ENCODE measurements at regions of chr9 and their contacts with region 1.

Region 1: GRCh38 chr9:96418074-96418809 is at the start of gene ZNF367:
- DNase-seq: peak; percentile 75 to 94 (median 82)
- ATAC-seq: peak; percentile 85
- H3K4me3 ChIP-seq: peak within 1 kb of the TSS; percentile 94
- H3K4me3 Mint-ChIP-seq: peak within 1 kb of the TSS; percentile 88 to 98 (median 92)
- H3K27ac ChIP-seq: peak within 1 kb of the TSS; percentile 98
- H3K27ac Mint-ChIP-seq: peak within 1 kb of the TSS; percentile 92 to 98 (median 96)
- H3K4me1 ChIP-seq: peaks cover 19 to 31% of the 10 kb centered on the region in 2 donors
- H3K4me1 Mint-ChIP-seq: peaks cover 21 to 39% (median 31%) of the 10 kb centered on the region in 7 donors
- H3K27me3 ChIP-seq: no peaks in the 10 kb centered on the region
- H3K27me3 Mint-ChIP-seq: no peaks in the 10 kb centered on the region
- total RNA-seq, gene ZNF367: 3.8 to 22.9 (median 5.5) TPM

Region 2: GRCh38 chr9:96327694-96328352 is 90.4 kb before region 1 on chr9:
- CTCF ChIA-PET with region 1: interaction called, 4 read pairs
- POLR2A ChIA-PET with region 1: interaction called, 3 read pairs
- intact Hi-C with region 1: loop called (anchors 1 kb)
- DNase-seq: peak in 8 of 9 donors; percentile 18 to 70 (median 54)
- ATAC-seq: peak; percentile 87
- H3K4me3 ChIP-seq: no peak overlapping the region
- H3K4me3 Mint-ChIP-seq: no peak overlapping the region
- H3K27ac ChIP-seq: no peak overlapping the region
- H3K27ac Mint-ChIP-seq: no peak overlapping the region
- H3K4me1 ChIP-seq: no peaks in the 10 kb centered on the region
- H3K4me1 Mint-ChIP-seq: no peaks in the 10 kb centered on the region
- H3K27me3 ChIP-seq: no peaks in the 10 kb centered on the region
- H3K27me3 Mint-ChIP-seq: no peaks in the 10 kb centered on the region

Region 3: GRCh38 chr9:96350866-96351265 is 67.4 kb before region 1 on chr9:
- CTCF ChIA-PET with region 1: no interaction called
- POLR2A ChIA-PET with region 1: no interaction called
- intact Hi-C with region 1: no loop called
- DNase-seq: no peak
- ATAC-seq: no peak
- H3K4me3 ChIP-seq: no peak overlapping the region
- H3K4me3 Mint-ChIP-seq: no peak overlapping the region
- H3K27ac ChIP-seq: no peak overlapping the region
- H3K27ac Mint-ChIP-seq: no peak overlapping the region
- H3K4me1 ChIP-seq: no peaks in the 10 kb centered on the region
- H3K4me1 Mint-ChIP-seq: no peaks in the 10 kb centered on the region
- H3K27me3 ChIP-seq: no peaks in the 10 kb centered on the region
- H3K27me3 Mint-ChIP-seq: no peaks in the 10 kb centered on the region

Region 4: DNA sequence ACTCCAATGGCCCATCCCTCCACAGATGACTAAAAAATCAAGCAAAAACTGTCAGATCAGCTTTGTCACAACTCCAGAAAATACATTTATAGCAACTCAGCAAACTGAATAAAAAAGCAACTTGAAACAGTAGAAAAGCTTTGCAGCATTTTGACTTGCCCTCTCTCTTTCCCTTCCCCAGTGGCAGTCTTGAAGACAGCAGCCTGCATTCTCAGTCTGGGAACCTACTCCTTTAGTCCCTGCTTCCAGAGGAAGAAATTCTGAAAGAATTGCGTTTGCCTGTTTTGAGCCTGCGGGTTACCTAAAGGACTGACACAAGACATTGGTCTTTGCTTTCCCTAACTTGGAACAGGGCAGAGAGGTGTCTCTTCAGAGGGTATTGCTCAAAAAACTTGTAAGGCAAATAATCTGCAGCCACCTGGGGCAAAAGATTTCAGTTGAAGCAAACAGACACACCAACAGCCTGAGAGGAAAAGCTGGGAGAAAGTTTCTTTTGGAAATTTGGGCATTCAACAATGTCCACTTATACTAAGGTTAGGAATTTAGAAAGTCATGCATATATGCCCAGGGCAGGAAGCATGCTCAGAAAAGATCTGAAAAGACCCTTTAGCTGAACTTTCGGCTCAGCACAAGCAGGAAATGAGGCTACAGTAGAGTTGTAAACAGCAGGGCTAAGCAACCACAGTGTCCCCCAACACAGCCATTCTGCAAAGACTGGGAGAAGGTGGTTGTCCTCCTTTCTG is 19.5 kb before region 1 on chr9:
- CTCF ChIA-PET with region 1: interaction called, 7 read pairs
- POLR2A ChIA-PET with region 1: interaction called, 38 read pairs
- intact Hi-C with region 1: loop called (anchors 1 to 2 kb)
- DNase-seq: peak in 6 of 9 donors; percentile 18 to 47 (median 28)
- ATAC-seq: peak; percentile 75
- H3K4me3 ChIP-seq: peak overlapping the region; percentile 28
- H3K4me3 Mint-ChIP-seq: peak overlapping the region; percentile 58 to 73 (median 68)
- H3K27ac ChIP-seq: peak overlapping the region; percentile 59
- H3K27ac Mint-ChIP-seq: peak overlapping the region; percentile 49 to 96 (median 91)
- H3K4me1 ChIP-seq: peaks cover 16 to 18% of the 10 kb centered on the region in 2 donors
- H3K4me1 Mint-ChIP-seq: peaks cover 15 to 32% (median 26%) of the 10 kb centered on the region in 7 donors
- H3K27me3 ChIP-seq: no peaks in the 10 kb centered on the region
- H3K27me3 Mint-ChIP-seq: no peaks in the 10 kb centered on the region

Region 5: DNA sequence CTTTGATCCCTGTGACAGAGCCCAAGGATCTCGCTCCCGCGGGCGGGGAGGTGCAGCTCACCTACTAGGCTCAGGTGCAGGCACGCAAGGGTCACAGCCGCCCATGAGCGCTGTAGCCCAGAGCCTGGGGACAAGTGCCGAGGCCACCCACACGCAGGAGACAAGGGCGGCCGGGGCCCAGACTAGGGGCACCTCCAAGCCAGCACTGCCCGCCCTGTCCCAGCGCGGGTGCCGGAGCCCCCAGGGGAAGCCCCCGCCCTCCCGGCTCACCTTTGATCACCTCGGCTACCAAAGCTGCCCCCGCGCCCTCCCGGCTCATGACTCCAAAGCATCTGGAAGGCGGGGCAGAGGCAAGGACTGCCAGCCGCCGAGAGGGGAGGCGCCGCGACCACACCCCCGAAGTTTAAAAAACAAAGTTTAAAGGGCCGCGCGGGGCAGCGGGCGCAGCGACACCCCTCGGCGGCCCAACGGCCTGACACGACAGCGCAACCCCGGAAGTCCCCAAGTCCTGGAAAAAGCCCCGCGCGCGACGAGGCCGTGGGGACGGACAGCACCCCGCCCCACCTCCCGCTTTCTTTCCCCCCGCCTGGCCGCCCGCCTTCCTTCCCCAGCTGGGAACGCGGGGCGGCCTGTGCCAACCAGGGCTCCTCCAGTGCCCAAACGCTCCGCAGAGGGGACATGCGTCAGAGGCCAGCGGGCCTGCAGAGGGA is 148.4 kb after region 1 on chr9:
- CTCF ChIA-PET with region 1: no interaction called
- POLR2A ChIA-PET with region 1: interaction called, 4 read pairs
- intact Hi-C with region 1: loop called (anchors 1 kb)
- DNase-seq: peak; percentile 64 to 81 (median 78)
- ATAC-seq: peak; percentile 92
- H3K4me3 ChIP-seq: peak overlapping the region; percentile 77
- H3K4me3 Mint-ChIP-seq: peak overlapping the region; percentile 83 to 95 (median 89)
- H3K27ac ChIP-seq: peak overlapping the region; percentile 89
- H3K27ac Mint-ChIP-seq: peak overlapping the region; percentile 52 to 91 (median 84)
- H3K4me1 ChIP-seq: peaks cover 8 to 16% of the 10 kb centered on the region in 2 donors
- H3K4me1 Mint-ChIP-seq: peaks cover 6 to 31% (median 29%) of the 10 kb centered on the region in 7 donors
- H3K27me3 ChIP-seq: no peaks in the 10 kb centered on the region
- H3K27me3 Mint-ChIP-seq: peaks cover 0 to 36% (median 3%) of the 10 kb centered on the region in 5 donors

Region 6: DNA sequence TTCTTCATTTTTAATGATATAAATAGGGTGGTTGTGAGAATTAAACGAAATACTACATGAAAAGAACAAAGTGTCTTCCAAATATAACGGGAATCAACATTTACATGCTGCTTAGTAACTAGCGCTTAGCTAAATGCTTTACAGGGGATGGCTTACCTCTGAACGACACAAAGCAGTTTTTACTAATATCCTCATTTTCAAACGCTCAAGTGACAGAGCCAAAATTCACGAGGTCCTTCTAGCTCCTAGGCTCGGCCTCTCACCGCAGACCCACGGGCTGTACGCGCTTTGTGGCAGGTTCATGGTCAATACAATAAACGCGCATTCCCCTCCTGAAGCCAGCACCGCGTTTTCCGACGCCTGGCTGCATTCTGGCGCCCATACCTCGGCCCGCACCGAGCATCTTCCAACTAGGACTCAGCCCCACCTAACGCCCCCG is 359.2 kb after region 1 on chr9:
- CTCF ChIA-PET with region 1: no interaction called
- POLR2A ChIA-PET with region 1: no interaction called
- intact Hi-C with region 1: loop called (anchors 5 to 10 kb)
- DNase-seq: peak in 5 of 9 donors; percentile 18 to 47 (median 29)
- ATAC-seq: peak; percentile 28
- H3K4me3 ChIP-seq: peak overlapping the region; percentile 84
- H3K4me3 Mint-ChIP-seq: peak overlapping the region; percentile 91 to 100 (median 98)
- H3K27ac ChIP-seq: peak overlapping the region; percentile 92
- H3K27ac Mint-ChIP-seq: peak overlapping the region; percentile 94 to 100 (median 98)
- H3K4me1 ChIP-seq: peaks cover 6 to 12% of the 10 kb centered on the region in 2 donors
- H3K4me1 Mint-ChIP-seq: peaks cover 12 to 64% (median 58%) of the 10 kb centered on the region in 7 donors
- H3K27me3 ChIP-seq: no peaks in the 10 kb centered on the region
- H3K27me3 Mint-ChIP-seq: no peaks in the 10 kb centered on the region